Esophagus squamous epithelium (tissue), 5 donors: ENCODE measurements at regions of chr19 and their contacts with region 1.

Region 1: DNA sequence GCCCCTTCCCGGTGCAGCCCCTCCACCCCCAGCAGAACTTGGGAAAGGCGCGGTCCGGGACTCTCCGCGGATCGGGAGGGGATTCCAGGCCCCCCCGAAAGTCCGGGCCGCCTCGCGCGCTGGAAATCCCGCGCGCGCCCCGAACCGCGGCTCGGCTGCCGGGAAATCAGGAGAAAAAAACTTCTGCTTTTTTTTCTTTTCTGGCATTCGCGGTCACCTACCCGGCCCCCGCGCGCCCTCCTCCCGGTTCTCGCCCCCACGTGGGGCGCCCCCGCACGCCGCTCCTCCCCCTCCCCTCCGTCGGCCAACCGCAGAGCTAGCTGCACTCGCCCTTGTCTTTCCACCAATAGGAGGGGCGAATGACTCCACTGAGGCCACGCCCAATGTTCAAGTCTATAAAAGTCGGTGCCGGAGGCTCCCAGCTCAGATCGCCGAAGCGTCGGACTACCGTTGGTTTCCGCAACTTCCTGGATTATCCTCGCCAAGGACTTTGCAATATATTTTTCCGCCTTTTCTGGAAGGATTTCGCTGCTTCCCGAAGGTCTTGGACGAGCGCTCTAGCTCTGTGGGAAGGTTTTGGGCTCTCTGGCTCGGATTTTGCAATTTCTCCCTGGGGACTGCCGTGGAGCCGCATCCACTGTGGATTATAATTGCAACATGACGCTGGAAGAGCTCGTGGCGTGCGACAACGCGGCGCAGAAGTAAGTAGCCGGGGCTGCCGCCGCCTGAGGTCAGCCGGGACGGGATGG is at the start of gene GADD45B:
- DNase-seq: peak; percentile 88
- H3K4me3 ChIP-seq: peak within 1 kb of the TSS; percentile 64 to 94 (median 88)
- H3K27ac ChIP-seq: peak within 1 kb of the TSS; percentile 90 to 96 (median 91)
- H3K4me1 ChIP-seq: peaks cover 28 to 59% (median 37%) of the 10 kb centered on the region in 3 donors
- H3K27me3 ChIP-seq: no peaks in the 10 kb centered on the region
- CTCF ChIP-seq: peak in 4 of 6 experiments; percentile 6 to 30 (median 18)
- POLR2A ChIP-seq: peak; percentile 70 to 100 (median 100)
- total RNA-seq, gene GADD45B: 21.6 to 40.1 (median 28.7) TPM

Region 2: DNA sequence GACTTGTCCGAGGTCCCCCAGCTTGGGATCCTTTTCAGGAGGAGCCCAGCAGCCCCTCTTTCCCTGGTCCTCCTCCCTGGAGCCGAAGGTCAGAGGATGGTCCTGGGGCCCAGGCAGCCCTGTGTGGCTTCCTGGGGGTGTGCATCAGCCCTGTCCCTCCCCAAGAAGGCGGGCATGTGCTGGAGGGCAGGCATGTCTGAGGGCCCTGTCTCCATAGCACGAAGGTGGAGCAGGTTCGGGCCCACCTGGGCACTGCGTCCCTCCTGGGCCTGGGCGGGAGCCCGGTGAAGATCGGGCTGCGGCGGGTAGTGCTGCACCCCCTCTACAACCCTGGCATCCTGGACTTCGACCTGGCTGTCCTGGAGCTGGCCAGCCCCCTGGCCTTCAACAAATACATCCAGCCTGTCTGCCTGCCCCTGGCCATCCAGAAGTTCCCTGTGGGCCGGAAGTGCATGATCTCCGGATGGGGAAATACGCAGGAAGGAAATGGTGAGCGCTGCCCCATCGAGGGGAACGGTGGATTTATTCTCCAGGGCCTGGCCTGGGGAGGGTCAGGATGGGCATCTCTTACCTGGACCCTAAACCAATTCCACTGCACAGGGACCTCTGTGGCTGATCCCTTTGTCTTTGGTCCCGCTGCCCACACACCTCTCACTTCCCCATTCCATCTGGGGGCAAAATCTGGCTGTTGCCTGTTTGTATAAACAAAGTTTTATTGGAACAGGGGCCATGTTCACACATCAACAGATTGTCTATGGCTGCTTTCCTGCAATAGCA is 59.4 kb before region 1 on chr19:
- intact Hi-C with region 1: no loop called
- DNase-seq: no peak
- H3K4me3 ChIP-seq: no peak overlapping the region
- H3K27ac ChIP-seq: no peak overlapping the region
- H3K4me1 ChIP-seq: no peaks in the 10 kb centered on the region
- H3K27me3 ChIP-seq: no peaks in the 10 kb centered on the region
- CTCF ChIP-seq: no peak
- POLR2A ChIP-seq: no peak

Region 3: DNA sequence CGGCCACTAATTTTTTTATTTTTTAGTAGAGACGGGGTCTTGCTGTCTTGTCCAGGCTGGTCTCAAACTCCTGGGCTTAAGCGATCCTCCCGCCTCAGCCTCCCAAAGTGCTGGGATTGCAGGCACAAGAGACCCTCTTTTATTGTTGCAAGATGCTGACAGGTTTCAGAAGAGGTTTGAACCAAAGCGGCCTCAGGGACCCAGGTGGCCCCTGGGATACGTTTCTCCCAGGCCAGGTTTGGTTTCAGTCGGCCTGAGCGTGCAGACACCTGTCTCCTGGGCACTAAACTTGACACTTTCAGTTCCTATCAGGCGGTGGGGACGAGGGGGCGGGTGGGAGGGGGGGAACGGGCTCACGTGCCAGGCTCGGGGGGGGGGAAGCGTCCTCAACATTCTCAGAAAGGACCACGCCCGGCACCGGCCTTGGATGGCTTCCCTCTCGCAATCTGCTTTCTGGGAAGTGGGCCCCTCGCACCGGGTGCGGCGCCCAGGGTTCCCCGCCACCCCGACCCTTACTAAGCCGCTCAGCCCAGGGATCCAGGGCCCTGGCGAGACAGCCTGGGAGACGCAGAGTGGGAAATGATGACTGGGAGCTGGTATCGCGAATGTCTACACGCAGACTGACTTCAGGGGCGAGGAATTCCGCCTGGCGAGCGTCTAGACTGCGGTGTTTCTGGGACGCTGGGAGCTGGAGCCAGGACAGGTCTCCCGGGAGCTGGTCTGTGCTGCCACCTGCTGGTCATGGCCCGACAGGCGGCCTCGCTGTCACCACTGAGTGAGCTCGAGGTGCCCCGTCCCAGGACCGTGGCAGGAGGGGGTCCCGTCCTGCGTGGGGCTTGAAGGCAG is 135.0 kb after region 1 on chr19:
- intact Hi-C with region 1: loop called (anchors 2 kb)
- DNase-seq: no peak
- H3K4me3 ChIP-seq: peak overlapping the region; percentile 34 to 72 (median 52)
- H3K27ac ChIP-seq: peak overlapping the region; percentile 64 to 90 (median 84)
- H3K4me1 ChIP-seq: peaks cover 6 to 34% (median 10%) of the 10 kb centered on the region in 3 donors
- H3K27me3 ChIP-seq: no peaks in the 10 kb centered on the region
- CTCF ChIP-seq: peak; percentile 96 to 99 (median 98)
- POLR2A ChIP-seq: peak in 1 of 4 donors; percentile 10